ENCODE measurements at regions of chr11 and their contacts with region 1.

Region 1: DNA sequence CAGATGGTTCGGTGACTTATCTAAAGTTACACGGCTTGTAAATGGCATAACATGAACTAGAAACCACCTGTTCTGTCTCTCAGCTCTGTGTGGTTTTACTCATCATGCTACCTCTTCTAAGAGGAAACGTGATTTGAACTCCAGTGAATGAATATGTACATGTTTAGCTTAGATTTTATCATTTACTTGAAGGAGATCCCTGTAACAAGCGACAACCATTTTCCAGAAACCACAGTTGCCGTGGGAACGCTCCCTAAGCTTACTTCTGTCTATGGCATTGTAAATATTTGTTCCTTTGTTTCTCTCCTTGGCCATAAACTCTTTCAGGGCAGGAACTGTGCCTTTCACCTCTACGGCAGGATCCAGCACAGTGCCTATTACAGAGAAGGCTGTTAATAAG is 17.0 kb upstream of the TPH1 start:
- DNase-seq: no peak
- H3K4me3 ChIP-seq: no peak overlapping the region
- CTCF ChIP-seq: no peak

Region 2: GRCh38 chr11:18145025-18145424 is 81.9 kb after region 1 on chr11:
- in situ Hi-C with region 1: loop called (anchors 5 kb)
- DNase-seq: no peak
- H3K4me3 ChIP-seq: no peak overlapping the region
- CTCF ChIP-seq: peak; percentile 24

Measured in astrocyte of the cerebellum (primary cell).